ENCODE measurements at regions of chr4 and their contacts with region 1.

Region 1: DNA sequence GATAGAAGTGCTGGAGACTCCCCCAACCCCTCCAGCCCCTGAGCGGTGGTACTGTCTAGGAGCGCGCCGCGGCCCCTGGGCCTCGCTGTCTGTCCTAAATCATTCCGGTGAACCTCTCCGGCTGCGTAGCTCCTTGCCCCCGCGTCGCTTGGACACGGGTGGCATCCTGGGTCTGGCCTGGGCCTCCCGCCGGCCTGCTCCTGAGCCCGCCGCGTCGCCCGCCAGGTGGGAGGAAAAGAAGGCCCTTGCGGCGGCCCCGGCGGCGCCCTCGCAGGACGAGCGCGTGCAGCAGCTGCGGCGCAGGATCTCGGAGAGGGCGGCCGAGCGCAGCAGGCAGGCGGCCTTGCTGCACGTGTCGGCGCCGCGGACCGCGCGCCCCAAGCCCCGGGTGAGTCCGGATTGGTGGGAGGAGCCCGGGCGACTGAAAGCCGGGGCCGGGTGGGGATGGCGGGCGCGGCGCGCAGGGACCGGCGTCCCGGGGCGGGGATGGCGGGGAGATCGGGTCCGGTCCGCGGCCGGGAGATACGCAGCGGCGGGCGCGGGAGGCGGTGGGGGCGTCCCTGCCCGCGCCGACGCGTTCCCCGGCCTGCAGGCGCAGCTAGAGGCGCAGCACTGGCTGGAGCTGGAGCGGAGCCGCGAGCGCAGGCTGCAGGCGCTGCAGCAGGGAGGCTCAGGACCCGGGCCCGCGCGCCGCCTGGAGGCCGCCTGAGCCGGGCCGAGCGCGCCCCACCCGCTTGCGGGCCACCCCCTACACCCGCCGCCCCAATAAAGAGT is 6.5 kb upstream of the RNF4 start:
- DNase-seq: peak; percentile 32 to 83 (median 66)
- H3K4me3 ChIP-seq: peak overlapping the region; percentile 43 to 77 (median 63)
- H3K27ac ChIP-seq: peak overlapping the region in 53 of 59 donors; percentile 2 to 87 (median 68)
- H3K27me3 ChIP-seq: no peaks in the 10 kb centered on the region
- CTCF ChIP-seq: peak in 54 of 56 donors; percentile 12 to 87 (median 62)

Region 2: DNA sequence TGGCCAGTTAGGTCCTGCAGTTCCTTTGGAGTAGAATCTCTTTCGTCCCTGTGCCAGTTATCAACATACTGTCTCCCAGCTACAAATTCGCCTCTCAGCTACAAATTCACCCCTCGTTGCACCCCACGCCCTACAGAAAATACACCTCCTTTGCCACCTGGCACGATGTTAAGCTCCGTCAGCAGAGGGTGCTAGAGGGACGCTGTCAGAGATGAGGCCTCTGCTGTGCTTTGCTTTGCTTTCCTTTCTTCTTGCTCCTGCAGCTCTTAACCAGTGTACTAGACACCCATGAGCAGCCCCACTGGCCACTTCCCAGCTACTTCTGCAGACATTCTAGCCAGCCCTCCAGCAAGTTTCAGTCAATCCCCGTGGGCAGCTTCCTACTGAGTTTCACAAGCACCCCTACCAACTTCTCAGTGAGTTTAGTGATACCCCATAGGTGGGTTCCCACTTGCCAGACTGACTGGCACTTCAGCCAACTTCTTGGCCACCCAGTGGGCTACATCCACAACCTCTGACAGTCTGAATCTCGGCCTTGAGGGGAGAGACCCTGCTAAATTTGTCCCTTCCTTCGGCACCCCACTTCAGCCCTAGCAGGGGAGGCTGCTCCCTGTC is 242.3 kb before region 1 on chr4:
- intact Hi-C with region 1: loop called in 1 of 2 experiments (anchors 5 kb)
- DNase-seq: peak; percentile 53 to 82 (median 68)
- H3K4me3 ChIP-seq: no peak overlapping the region
- H3K27ac ChIP-seq: peak overlapping the region in 6 of 59 donors; percentile 19 to 70 (median 44)
- H3K27me3 ChIP-seq: no peaks in the 10 kb centered on the region
- CTCF ChIP-seq: peak; percentile 55 to 92 (median 82)

Region 3: DNA sequence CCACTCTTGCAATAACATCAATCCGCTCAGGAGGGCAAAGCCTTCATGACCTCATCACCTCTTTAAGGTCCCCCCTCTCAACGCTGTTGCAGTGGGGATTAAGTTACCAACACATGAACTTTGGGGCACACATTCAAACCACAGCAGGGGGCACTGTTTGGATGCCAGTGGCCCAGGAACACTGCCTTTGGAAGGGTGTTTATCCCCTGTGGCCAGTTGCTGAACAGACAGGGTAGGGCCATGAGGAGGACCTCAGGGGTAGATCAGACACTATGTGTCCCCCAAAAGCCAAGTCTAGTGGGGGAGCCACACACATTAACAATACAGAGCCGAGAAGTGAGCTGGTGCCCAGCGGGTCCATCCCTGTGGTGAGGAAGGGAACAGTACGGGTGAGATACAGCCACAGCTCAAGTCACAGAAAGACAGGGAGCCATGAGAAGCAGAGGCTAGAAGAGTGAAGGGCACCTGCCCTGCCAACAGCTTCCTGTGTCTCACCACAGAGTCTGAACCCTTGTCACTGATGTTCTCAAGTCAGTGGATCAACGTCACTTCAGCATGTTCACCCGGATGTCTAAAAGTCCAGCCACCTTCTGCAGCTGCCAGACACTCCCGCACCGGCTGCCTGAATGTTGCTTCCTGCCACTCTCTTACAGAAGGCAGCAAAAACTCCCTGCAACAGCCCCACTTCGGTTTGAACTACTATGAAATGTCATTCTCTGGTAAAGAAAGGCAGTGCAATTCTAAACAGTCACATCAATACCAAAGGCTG is 180.6 kb before region 1 on chr4:
- intact Hi-C with region 1: loop called in 1 of 2 experiments (anchors 5 kb)
- DNase-seq: no peak
- H3K4me3 ChIP-seq: no peak overlapping the region
- H3K27ac ChIP-seq: peak overlapping the region in 2 of 59 donors; percentile 16 to 60
- H3K27me3 ChIP-seq: no peaks in the 10 kb centered on the region
- CTCF ChIP-seq: peak in 2 of 56 donors; percentile 13 to 14

Region 4: DNA sequence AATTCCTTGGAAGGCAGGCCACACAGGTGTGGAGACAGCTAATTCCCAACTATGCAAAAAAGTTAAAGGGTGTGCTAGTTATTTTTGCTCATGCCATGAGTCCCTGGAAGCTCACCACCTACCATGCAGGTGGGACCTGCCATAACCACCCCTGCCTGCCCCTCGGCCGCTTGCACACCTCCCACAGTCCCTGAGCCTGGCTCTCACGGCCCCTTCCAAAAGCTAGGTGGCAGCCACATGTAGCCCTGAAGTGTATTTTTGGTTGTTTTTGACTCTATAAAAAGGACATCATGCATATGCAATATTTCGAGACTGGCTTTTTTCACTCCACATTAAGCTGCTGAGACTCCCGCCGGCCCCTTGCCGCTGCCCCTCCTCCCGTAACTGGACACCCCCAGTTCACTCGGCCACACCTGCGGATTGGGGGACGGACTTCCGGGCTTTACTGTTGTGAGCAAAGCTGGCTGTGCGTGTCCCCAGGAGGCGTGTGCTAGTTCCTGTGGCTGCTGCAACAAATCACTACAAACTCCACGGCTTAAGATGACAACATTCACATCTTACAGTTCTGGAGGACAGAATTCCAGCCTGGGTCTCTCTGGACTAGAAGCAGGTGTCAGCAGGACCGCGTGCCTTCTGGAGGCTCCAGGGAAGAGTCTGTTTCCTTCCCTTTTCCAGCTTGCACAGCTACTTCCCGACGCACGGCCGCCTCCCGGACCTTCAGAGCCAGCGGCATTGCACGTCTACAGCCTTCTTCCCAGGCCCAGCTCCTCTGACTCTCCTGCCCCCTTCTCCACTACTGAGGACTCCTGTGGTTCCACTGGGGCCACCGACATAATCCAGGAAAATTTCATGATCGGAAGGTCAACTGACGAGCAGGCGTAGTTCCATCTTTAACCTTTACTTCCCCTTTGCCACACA is 68.8 kb before region 1 on chr4:
- intact Hi-C with region 1: no loop called
- DNase-seq: no peak
- H3K4me3 ChIP-seq: peak overlapping the region in 29 of 59 donors; percentile 1 to 42 (median 20)
- H3K27ac ChIP-seq: peak overlapping the region in 2 of 59 donors; percentile 6 to 80
- H3K27me3 ChIP-seq: no peaks in the 10 kb centered on the region
- CTCF ChIP-seq: peak in 3 of 56 donors; percentile 6 to 9 (median 8)

Region 5: DNA sequence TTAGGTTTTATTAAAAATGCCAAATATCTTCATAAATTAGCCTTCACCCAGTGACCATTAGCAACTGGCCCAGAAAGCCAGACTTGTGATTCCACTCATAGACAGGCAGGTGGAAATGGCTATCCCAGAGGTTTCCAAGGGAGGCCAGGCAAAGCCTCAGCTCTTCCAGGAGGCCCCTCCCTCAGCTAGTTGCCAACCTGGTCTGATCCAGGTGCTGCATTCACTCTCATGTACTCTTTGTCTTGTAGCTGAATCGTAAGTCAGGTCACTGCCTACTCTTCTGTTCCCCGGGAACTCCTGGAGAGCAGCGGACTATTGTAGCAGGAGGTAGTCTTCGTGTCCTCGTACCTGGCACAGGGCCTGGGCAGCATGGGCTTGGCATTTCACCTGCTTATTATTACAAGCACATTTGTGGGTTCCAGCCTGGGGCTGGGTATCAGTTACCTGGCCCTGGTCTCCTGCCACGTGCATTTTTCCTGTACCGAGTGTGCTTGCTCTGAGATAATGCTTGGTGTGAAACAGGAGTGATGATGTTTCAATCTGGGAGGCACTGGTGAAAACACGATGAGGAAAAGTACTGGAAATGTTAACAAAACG is 175.6 kb after region 1 on chr4:
- intact Hi-C with region 1: no loop called
- DNase-seq: peak in 3 of 10 donors; percentile 26 to 53 (median 30)
- H3K4me3 ChIP-seq: no peak overlapping the region
- H3K27ac ChIP-seq: no peak overlapping the region
- H3K27me3 ChIP-seq: no peaks in the 10 kb centered on the region
- CTCF ChIP-seq: no peak

Measured in dorsolateral prefrontal cortex (tissue), 120 donors.